Calu3 (cell line): ENCODE measurements at regions of chr9 and their contacts with region 1.

Region 1: GRCh38 chr9:70484210-70485130 is 70.0 kb upstream of the KLF9 start:
- DNase-seq: peak; percentile 24
- H3K4me3 Mint-ChIP-seq: no peak overlapping the region
- H3K27ac Mint-ChIP-seq: no peak overlapping the region
- H3K4me1 Mint-ChIP-seq: peaks cover 19% of the 10 kb centered on the region
- H3K27me3 Mint-ChIP-seq: no peaks in the 10 kb centered on the region
- CTCF ChIP-seq: peak; percentile 37

Region 2: DNA sequence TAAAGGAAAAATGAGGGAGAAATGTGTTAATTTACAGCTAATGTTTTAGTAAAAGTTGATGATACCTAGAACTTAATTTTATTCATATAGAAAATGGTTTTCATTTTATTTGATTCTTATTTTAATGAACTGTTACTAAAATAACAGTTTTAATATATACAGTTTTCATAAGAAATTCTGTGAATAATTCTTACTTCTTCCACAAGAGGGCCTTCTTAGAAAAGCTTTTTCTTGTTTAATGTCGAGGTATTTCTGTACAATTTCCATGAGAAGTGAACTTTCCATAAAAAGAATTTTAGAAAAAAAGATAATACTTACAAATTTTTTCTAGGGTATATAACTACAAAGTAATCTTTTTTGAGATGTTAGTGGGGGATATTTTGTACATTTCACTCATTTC is 143.9 kb before region 1 on chr9:
- CTCF ChIA-PET with region 1: no interaction called
- intact Hi-C with region 1: loop called (anchors 2 kb)
- DNase-seq: no peak
- H3K4me3 Mint-ChIP-seq: no peak overlapping the region
- H3K27ac Mint-ChIP-seq: no peak overlapping the region
- H3K4me1 Mint-ChIP-seq: no peaks in the 10 kb centered on the region
- H3K27me3 Mint-ChIP-seq: no peaks in the 10 kb centered on the region
- CTCF ChIP-seq: no peak

Region 3: DNA sequence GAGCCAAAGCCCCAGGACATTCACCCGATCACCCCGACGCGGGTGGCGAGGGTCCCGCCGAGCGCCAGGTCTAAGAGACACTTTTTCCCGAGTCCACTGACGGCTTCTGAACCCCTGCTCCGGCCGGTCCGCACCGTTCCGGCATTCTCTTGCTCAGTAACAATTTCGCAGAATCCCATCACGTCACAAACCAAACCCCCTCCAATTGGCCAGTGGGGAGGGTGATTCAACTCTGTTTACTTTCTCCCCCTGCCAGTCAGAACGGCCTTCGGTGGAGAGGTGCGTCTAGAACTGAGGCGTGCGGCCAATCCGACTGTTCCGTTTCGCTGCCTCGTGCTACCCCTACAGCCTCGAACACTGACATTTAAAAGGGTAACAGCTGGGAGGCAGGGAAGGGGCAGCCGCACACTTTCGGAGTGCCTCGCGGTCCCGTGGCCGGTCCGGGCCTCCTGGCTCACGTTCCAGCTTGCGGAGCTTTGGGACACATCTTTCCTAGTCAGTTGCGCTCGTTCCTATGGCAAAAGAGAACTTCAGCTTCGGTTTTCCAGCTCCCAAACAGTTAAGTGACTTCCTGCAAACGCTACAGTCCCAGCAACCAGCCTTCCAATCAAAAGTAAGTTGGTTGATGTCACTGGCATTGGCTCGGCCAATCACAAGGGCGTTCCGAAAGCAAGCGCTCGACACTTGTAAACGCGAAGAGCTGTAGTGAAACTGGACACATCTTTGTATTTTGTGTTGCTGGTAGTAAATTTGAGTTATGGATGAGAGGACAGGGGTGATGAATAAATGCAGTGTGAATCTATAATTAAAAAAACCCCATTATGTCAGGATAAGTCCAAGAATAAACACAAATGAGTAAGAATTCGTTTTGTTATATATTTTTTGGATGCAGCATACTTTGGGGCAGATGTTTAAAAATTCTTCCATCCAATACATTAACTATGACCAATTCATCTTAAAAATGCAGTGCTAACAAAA is 70.4 kb before region 1 on chr9 and contains the start of gene KLF9:
- CTCF ChIA-PET with region 1: interaction called, 5 read pairs
- intact Hi-C with region 1: loop called (anchors 5 kb)
- DNase-seq: peak; percentile 69
- H3K4me3 Mint-ChIP-seq: peak within 1 kb of the TSS; percentile 86
- H3K27ac Mint-ChIP-seq: peak within 1 kb of the TSS; percentile 83
- H3K4me1 Mint-ChIP-seq: peaks cover 28% of the 10 kb centered on the region
- H3K27me3 Mint-ChIP-seq: no peaks in the 10 kb centered on the region
- CTCF ChIP-seq: no peak
- total RNA-seq, gene KLF9: 0.81 and 0.87 TPM in 2 replicates

Region 4: GRCh38 chr9:70419546-70420266 is 64.8 kb before region 1 on chr9:
- CTCF ChIA-PET with region 1: interaction called, 5 read pairs
- intact Hi-C with region 1: loop called (anchors 2 kb)
- DNase-seq: peak; percentile 81
- H3K4me3 Mint-ChIP-seq: peak overlapping the region; percentile 94
- H3K27ac Mint-ChIP-seq: peak overlapping the region; percentile 94
- H3K4me1 Mint-ChIP-seq: peaks cover 11% of the 10 kb centered on the region
- H3K27me3 Mint-ChIP-seq: peaks cover 25% of the 10 kb centered on the region
- CTCF ChIP-seq: no peak